CD14-positive monocyte (primary cell): ENCODE measurements at regions of chr20 and their contacts with region 1.

Region 1: DNA sequence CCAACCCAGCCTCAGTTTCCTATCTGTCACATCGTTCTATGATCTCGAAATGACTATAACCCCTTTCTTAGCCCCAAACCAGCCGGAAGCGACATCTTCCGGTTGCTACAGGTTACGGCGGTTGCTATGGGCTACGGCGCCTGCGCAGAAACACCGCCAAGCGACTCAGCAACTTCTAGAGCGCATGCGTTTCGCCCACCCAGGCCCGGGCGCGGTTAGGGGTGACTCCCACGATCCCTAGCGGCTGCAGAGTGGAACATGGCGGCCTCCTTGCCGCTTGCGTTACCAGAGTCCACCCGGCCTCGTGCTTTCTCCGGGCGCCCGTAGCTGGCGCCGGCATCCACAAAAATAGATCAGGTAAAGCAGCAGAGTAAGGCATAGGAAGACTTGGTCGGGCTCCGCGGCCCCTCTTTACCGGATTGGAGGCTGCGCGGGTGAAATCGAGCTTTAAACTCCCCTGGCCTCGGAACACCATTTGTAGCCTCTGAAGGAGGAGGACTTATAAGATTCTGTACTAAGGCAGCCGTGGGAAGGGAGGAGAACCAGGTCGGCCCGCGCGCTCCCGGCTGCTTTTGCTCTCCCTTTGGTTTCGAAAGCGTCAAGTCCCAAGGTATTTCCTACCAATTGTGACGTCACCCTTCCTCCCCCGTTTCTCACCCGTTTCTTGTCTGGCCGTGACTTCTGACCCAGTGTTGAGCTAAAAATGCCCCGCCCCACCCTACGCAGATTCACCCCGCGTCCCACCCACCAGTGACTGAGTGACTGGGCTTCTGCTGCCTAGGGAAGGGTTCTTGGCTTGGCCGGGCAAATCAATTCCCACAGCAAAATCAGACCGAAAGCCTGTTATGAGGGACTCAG is 3.5 kb downstream of the SDCBP2 start:
- DNase-seq: peak; percentile 98 to 99 (median 99)
- H3K4me3 ChIP-seq: peak overlapping the region; percentile 66 to 85 (median 75)
- H3K4me3 Mint-ChIP-seq: no peak overlapping the region
- H3K27ac ChIP-seq: peak overlapping the region; percentile 92 to 99
- H3K27ac Mint-ChIP-seq: no peak overlapping the region
- H3K4me1 ChIP-seq: peaks cover 16 to 30% of the 10 kb centered on the region in 2 donors
- H3K4me1 Mint-ChIP-seq: peaks cover 35% of the 10 kb centered on the region
- H3K27me3 ChIP-seq: no peaks in the 10 kb centered on the region
- H3K27me3 Mint-ChIP-seq: peaks cover 0 to 3% (median 0%) of the 10 kb centered on the region in 3 donors
- CTCF ChIP-seq: no peak

Region 2: GRCh38 chr20:1281279-1282057 is 43.9 kb before region 1 on chr20:
- intact Hi-C with region 1: no loop called
- DNase-seq: no peak
- H3K4me3 ChIP-seq: no peak overlapping the region
- H3K4me3 Mint-ChIP-seq: no peak overlapping the region
- H3K27ac ChIP-seq: no peak overlapping the region
- H3K27ac Mint-ChIP-seq: no peak overlapping the region
- H3K4me1 ChIP-seq: no peaks in the 10 kb centered on the region
- H3K4me1 Mint-ChIP-seq: no peaks in the 10 kb centered on the region
- H3K27me3 ChIP-seq: no peaks in the 10 kb centered on the region
- H3K27me3 Mint-ChIP-seq: peaks cover 1 to 8% (median 6%) of the 10 kb centered on the region in 3 donors
- CTCF ChIP-seq: no peak

Region 3: DNA sequence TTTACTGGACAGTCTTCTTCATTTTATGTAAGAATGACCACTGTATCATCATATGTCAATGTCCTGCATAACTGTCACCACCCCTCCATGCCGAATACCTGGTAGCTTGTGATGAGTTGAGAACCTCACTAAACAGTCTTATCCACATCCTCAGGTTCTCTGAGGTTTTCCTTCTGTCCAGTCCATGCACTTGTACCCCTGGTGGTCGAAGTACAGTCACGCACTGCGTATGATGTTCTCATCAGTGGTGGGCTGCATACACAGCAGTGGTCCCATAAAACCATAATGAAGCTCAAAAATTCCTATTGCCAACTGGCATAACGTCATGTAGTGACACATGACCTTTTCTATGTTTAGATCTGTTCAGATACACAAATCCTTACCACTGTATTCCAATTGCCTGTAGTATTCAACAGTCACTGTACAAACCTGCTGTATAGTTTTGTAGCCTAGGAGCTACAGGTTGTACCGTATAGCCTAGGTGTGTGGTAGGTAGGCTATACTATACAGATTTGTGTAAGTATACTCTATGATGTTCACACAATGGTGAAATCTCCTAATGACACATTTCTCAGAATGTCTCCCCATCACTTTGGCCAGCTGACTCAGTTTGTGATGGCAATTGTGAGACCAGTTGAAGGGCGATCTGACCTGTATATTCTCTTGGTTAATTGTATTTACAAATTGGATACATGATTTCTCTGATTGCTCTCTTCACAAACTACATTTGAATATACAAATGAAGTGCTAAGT is 34.9 kb after region 1 on chr20:
- intact Hi-C with region 1: no loop called
- DNase-seq: no peak
- H3K4me3 ChIP-seq: no peak overlapping the region
- H3K4me3 Mint-ChIP-seq: no peak overlapping the region
- H3K27ac ChIP-seq: no peak overlapping the region
- H3K27ac Mint-ChIP-seq: no peak overlapping the region
- H3K4me1 ChIP-seq: no peaks in the 10 kb centered on the region
- H3K4me1 Mint-ChIP-seq: peaks cover 17% of the 10 kb centered on the region
- H3K27me3 ChIP-seq: no peaks in the 10 kb centered on the region
- H3K27me3 Mint-ChIP-seq: peaks cover 0 to 1% (median 0%) of the 10 kb centered on the region in 3 donors
- CTCF ChIP-seq: no peak

Region 4: DNA sequence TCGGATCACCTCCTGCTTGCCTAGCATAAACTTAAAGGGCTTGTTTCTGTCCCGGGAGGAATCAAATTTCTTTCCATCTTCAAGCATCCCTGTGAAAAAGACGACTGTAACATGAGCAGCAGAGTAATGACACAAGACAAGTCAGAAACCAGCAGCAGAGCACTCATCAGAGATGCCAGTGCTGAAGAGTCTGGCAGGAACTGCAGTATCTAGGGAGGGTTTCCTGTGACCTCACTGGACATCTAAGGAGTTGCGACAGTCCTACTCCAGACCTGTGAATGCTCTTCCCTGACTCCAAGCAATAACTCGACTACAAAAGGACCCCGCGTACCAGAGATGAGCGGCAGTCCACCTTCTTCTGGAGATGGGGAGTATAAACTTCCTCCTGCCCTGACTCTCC is 50.1 kb after region 1 on chr20:
- intact Hi-C with region 1: loop called (anchors 5 kb)
- DNase-seq: peak; percentile 42 to 74 (median 74)
- H3K4me3 ChIP-seq: peak overlapping the region in 2 of 3 experiments; percentile 11 to 35
- H3K4me3 Mint-ChIP-seq: peak overlapping the region in 1 of 2 donors; percentile 82
- H3K27ac ChIP-seq: peak overlapping the region; percentile 57 to 83
- H3K27ac Mint-ChIP-seq: peak overlapping the region; percentile 90 to 97 (median 92)
- H3K4me1 ChIP-seq: peaks cover 61 to 63% of the 10 kb centered on the region in 2 donors
- H3K4me1 Mint-ChIP-seq: peaks cover 74% of the 10 kb centered on the region
- H3K27me3 ChIP-seq: no peaks in the 10 kb centered on the region
- H3K27me3 Mint-ChIP-seq: peaks cover 0 to 2% (median 2%) of the 10 kb centered on the region in 3 donors
- CTCF ChIP-seq: no peak